Ascending aorta (tissue), 2 donors: ENCODE measurements at regions of chr2 and their contacts with region 1.

Region 1: DNA sequence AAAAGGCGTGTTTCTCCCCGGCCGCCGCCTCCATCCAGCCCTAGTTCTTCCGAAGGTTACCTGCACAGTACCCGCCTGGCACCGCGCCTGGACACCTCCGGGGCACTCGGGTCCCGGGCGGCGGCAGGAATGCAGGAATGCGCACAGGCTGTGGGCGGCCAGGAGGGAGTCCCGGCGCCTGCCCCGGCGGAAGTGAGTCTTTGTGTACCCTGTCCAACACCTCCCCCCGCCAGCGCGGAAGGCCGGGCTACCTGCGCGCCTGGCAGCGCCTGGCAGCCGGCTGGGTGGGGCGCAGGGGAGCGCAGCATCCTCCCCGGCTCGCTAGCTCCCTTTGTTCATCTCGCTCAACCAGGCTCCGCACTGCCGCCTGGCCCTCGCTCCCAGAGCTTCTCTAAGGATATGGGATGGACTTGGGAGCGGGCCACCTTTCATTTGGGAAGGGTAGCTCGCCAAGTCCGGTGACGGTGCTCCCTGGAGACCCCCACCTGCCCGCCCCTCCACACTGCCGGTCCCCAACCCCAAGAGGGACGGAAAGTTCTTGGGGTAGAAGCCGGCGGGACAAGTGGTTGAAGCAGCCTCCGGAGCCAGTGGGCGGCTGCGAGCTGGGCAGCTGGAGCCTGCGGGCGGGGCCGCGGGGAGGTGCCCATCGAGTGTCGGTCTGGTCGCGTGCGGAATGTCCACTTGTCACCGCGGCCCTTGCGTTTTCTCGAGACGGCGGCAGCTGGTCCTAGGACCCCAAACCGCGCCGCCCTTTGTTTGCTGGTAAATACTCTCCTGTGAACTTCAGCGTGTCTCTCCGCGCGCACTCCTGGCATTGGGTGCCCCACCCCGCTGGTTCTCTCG is 1.2 kb upstream of the ST6GAL2 start:
- DNase-seq: peak in 1 of 2 donors; percentile 78
- H3K4me3 ChIP-seq: peak overlapping the region; percentile 80 to 98
- H3K27ac ChIP-seq: peak overlapping the region; percentile 93 to 97
- H3K4me1 ChIP-seq: peaks cover 0 to 3% of the 10 kb centered on the region in 2 donors
- H3K27me3 ChIP-seq: no peaks in the 10 kb centered on the region
- CTCF ChIP-seq: no peak

Region 2: GRCh38 chr2:106771811-106772210 is 115.3 kb before region 1 on chr2:
- intact Hi-C with region 1: no loop called
- DNase-seq: no peak
- H3K4me3 ChIP-seq: no peak overlapping the region
- H3K27ac ChIP-seq: no peak overlapping the region
- H3K4me1 ChIP-seq: no peaks in the 10 kb centered on the region
- H3K27me3 ChIP-seq: no peaks in the 10 kb centered on the region
- CTCF ChIP-seq: no peak

Region 3: DNA sequence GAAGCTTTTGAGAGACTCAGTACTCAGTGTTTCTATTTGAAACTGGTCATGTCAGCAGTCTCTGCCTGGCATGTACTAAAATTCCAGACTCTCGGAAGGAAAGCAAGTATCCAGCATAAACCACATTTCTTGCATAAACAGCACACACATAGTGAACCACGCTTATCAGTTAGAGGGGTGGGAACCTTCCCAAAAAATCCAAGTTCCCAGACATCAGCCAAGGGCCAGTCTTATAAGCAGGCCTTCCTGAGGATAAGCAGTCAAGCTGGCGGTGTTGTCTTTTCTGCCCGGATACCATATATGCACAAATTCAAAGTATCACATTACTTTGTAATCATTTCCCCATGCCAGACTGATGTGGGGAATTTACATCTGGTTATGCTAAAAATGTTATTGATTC is 74.8 kb before region 1 on chr2:
- intact Hi-C with region 1: loop called (anchors 5 kb)
- DNase-seq: peak in 1 of 2 donors; percentile 78
- H3K4me3 ChIP-seq: peak overlapping the region in 1 of 2 donors; percentile 6
- H3K27ac ChIP-seq: peak overlapping the region; percentile 69 to 85
- H3K4me1 ChIP-seq: peaks cover 7 to 56% of the 10 kb centered on the region in 2 donors
- H3K27me3 ChIP-seq: no peaks in the 10 kb centered on the region
- CTCF ChIP-seq: no peak

Region 4: GRCh38 chr2:106851087-106851874 is 35.9 kb before region 1 on chr2:
- intact Hi-C with region 1: loop called (anchors 5 kb)
- DNase-seq: no peak
- H3K4me3 ChIP-seq: peak overlapping the region; percentile 22 to 41
- H3K27ac ChIP-seq: peak overlapping the region; percentile 81 to 85
- H3K4me1 ChIP-seq: peaks cover 10 to 73% of the 10 kb centered on the region in 2 donors
- H3K27me3 ChIP-seq: no peaks in the 10 kb centered on the region
- CTCF ChIP-seq: no peak

Region 5: GRCh38 chr2:106996171-106996769 is 109.1 kb after region 1 on chr2:
- intact Hi-C with region 1: loop called (anchors 5 kb)
- DNase-seq: no peak
- H3K4me3 ChIP-seq: peak overlapping the region in 1 of 2 donors; percentile 53
- H3K27ac ChIP-seq: peak overlapping the region in 1 of 2 donors; percentile 68
- H3K4me1 ChIP-seq: peaks cover 6 to 16% of the 10 kb centered on the region in 2 donors
- H3K27me3 ChIP-seq: no peaks in the 10 kb centered on the region
- CTCF ChIP-seq: no peak

Region 6: DNA sequence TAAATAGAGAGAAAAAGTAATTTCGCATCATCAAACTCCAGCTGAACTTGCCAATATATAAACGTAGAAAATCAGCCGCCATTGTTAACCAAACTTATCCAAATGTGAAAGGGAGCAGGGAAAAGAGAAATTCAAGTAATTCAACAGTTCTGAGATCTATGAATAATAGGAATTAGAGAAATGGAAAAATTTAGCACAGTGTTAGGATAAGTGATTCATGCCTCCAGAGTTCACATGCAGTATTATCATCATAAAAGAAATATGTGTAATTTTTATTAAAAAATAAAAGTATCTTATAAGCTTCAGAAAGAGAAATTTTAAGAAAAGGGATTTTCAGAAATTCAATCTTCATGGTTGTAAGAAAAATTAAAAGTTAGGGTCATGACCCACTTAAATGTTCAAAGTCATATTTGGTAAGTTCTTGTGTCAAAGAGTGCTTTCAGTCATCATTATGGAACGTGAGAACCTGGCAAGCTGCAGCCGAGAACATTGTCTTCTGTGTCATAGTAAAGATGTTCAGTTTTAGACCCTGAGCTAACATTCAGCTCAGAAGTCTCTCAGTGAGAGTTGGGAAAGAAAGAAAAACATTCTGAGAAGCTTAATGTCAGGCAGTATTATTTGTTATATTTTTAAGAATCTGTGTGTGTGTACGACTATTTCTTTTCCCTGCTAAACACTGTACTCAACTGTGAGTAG is 525.2 kb after region 1 on chr2:
- intact Hi-C with region 1: loop called (anchors 5 kb)
- DNase-seq: peak in 1 of 2 donors; percentile 81
- H3K4me3 ChIP-seq: peak overlapping the region in 1 of 2 donors; percentile 17
- H3K27ac ChIP-seq: peak overlapping the region; percentile 69 to 75
- H3K4me1 ChIP-seq: peaks cover 0 to 12% of the 10 kb centered on the region in 2 donors
- H3K27me3 ChIP-seq: no peaks in the 10 kb centered on the region
- CTCF ChIP-seq: no peak